HepG2 (cell line): ENCODE measurements at regions of chr12 and their contacts with region 1.

Region 1: DNA sequence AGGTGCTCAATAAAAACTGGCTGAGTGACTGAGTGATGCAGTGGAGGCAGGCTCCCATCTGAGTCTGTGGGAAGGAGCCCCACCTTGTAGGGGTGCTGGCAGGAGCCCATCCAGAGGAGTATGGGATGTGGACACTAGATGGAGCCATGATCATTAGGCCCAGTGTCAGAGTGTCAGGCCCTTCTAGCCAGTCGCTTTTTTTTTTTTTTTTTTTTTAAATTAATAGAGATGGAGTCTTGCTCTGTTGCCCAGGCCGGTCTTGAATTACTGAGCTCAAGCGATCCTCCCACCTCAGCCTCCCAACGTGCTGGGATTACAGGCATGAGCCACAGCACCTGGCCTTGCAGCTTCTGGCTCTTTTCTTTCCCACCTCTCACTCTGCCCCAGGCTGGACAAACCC is 11.5 kb downstream of the RITA1 start:
- DNase-seq: peak; percentile 69
- ATAC-seq: peak; percentile 91
- H3K4me3 ChIP-seq: no peak overlapping the region
- H3K27ac ChIP-seq: no peak overlapping the region
- H3K4me1 ChIP-seq: peaks cover 14% of the 10 kb centered on the region
- H3K27me3 ChIP-seq: no peaks in the 10 kb centered on the region
- CTCF ChIP-seq: peak; percentile 82
- EP300 ChIP-seq: no peak
- POLR2A ChIP-seq: no peak
- RAD21 ChIP-seq: peak; percentile 59; the same call in 1 of the 2 replicates

Region 2: DNA sequence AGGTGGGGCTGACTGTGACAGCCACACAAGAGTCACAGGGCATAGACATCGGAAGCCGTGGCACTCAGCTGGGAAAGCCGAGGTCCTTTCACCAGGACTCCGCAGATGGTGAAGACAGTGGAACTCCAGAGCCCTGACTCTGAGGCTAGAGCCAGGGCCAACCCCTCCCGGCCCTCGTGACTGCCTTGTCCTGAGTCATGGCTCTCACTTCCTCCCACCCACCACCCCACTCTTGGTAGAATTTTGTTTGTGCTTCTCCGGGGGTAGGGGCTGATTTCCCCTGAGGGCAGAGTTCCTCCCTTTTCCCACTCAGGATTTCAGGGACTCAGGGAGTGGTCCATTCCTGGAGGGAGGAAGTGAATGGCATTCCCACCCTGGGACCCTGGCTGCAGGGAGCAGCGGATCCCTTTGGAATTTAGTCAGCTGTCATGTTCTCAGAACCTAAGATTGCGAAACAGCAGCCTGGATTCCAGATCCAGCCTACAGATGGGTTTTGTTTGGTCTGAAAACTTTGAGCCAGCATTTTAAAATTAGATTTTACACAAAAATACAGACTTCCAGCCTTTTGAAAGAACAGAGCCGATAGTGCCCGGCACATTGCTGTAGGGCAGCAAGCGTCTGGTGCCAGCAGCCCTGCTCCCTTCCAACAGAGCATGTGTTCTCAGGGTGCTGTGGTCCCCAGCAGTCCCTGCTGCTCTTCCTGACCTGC is 75.0 kb after region 1 on chr12:
- CTCF ChIA-PET with region 1: no interaction called
- POLR2A ChIA-PET with region 1: no interaction called
- in situ Hi-C with region 1: no loop called
- intact Hi-C with region 1: loop called (anchors 10 kb)
- DNase-seq: peak; percentile 74
- ATAC-seq: peak; percentile 87
- H3K4me3 ChIP-seq: peak overlapping the region in 1 of 3 experiments; percentile 30; a peak in 1 of 6 replicates
- H3K27ac ChIP-seq: peak overlapping the region; percentile 41
- H3K4me1 ChIP-seq: peaks cover 43% of the 10 kb centered on the region
- H3K27me3 ChIP-seq: no peaks in the 10 kb centered on the region
- CTCF ChIP-seq: no peak
- EP300 ChIP-seq: no peak; a peak in 1 of 4 replicates
- POLR2A ChIP-seq: no peak
- RAD21 ChIP-seq: no peak

Region 3: DNA sequence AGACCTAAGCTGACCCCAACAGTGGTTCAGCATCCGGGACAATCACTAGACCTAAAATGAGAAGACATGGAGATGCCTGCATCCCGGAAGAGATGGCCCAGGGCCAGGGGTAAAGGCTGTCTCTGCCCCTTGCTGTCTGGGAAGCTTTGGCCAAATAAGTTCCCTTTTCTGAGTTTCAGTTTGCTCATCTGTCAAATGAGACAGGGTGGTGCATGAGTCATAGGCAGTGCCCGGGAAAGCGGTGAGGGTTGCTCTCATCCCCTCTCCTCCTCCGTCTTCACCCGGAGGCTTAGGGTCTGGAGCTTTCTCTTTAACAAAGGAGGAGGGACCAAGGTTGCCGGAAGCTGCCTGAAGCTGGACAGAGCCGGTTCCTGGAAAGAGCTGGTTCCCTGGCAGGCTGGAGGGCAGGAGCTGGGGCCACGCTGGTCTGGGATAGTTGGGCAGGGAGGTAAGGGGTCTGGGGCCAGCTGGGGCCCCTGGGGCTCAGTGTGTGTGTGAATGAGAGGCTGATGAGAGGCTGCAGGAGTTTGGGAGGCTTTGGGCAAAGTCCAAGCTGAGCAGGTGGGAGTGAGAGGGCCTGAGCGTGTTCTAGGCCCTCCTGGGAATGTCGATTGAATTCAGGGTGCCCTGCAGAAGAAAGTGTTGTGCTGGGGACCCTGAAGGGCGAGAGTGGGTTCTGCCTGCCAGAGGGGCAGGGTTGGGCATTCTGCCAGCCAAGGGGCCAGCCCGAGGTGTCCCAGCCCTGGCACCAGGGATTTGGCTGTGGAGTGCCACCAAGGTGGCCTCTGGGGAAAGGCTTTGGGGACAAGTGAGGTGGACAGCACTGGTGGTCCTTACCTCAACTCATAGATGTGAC is 225.3 kb after region 1 on chr12 and contains the start of gene SDSL:
- CTCF ChIA-PET with region 1: interaction called, 6 read pairs
- POLR2A ChIA-PET with region 1: no interaction called
- in situ Hi-C with region 1: no loop called
- intact Hi-C with region 1: loop called (anchors 10 kb)
- DNase-seq: peak; percentile 48
- ATAC-seq: peak; percentile 70
- H3K4me3 ChIP-seq: peak within 1 kb of the TSS; percentile 64 to 77 (median 65)
- H3K27ac ChIP-seq: peak within 1 kb of the TSS; percentile 34
- H3K4me1 ChIP-seq: peaks cover 52% of the 10 kb centered on the region
- H3K27me3 ChIP-seq: no peaks in the 10 kb centered on the region
- CTCF ChIP-seq: no peak
- EP300 ChIP-seq: no peak
- POLR2A ChIP-seq: peak in 1 of 2 experiments; percentile 56; a peak in 2 of 4 replicates
- RAD21 ChIP-seq: no peak
- total RNA-seq, gene SDSL: 1.2 and 1.3 TPM in 2 replicates